OCI-LY7 (cell line): ENCODE measurements at regions of chr6 and their contacts with region 1.

Region 1: DNA sequence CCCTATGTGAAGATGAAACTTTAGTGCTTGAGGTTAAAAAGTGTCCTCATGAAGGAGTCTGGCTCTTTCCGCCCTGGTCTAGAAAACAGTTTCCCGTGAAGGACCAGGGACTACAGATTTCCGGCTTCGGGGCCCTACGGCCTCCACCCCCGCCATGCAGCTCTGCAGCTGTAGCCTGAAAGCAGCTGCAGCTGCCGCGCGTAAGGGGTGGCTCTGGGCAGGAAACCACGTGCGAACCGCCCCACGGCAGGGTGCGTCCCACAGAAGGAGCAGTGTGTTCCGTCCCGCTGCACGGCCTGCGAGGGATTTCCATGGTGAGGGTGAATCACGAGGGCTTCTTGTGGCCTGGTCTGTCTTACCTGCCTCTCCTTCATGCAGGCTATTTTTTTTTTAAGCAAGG is 117.0 kb downstream of the ERMARD start:
- DNase-seq: peak; percentile 83
- H3K4me3 ChIP-seq: no peak overlapping the region
- H3K27ac ChIP-seq: peak overlapping the region; percentile 41
- H3K4me1 ChIP-seq: peaks cover 38% of the 10 kb centered on the region
- CTCF ChIP-seq: no peak

Region 2: GRCh38 chr6:168658059-168658458 is 1210.4 kb before region 1 on chr6:
- CTCF ChIA-PET with region 1: no interaction called
- POLR2A ChIA-PET with region 1: no interaction called
- intact Hi-C with region 1: no loop called
- DNase-seq: no peak
- H3K4me3 ChIP-seq: no peak overlapping the region
- H3K27ac ChIP-seq: no peak overlapping the region
- H3K4me1 ChIP-seq: no peaks in the 10 kb centered on the region
- CTCF ChIP-seq: no peak

Region 3: DNA sequence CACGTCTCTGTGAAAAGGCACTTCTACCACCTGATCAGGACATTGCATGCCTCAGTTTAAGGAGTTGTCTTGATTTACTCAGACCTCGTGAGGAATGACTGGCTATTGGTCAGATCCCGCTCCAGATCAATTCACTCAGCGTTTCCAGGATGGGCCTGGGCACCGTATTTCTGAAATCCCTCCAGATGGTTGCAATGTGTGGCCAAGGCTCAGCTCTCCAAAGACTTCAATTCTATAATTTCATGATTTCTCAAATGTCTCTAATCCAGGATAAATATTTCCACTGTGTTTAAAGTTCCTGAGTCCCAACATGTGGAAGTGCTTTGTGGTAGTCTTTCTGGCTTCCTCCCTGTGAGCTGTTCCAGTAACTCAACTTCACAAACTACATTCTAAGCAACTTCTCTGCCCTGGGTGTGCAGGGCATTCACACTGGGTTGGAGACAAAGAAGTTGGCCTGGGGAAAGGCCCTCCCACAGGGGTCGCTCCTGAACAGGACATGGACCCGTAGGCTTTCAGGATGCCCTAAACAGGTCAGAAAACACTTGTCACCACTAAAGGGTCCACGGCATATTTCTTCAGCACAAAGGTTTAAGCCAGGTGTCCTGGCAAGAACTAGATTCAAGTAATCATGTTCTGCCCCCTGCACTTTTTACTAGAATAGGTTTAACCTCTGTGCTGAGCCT is 378.8 kb before region 1 on chr6:
- CTCF ChIA-PET with region 1: no interaction called
- POLR2A ChIA-PET with region 1: no interaction called
- intact Hi-C with region 1: no loop called
- DNase-seq: no peak
- H3K4me3 ChIP-seq: no peak overlapping the region
- H3K27ac ChIP-seq: no peak overlapping the region
- H3K4me1 ChIP-seq: no peaks in the 10 kb centered on the region
- CTCF ChIP-seq: no peak

Region 4: GRCh38 chr6:169949511-169950097 is 81.1 kb after region 1 on chr6:
- CTCF ChIA-PET with region 1: interaction called, 3 read pairs
- POLR2A ChIA-PET with region 1: no interaction called
- intact Hi-C with region 1: loop called (anchors 2 kb)
- DNase-seq: peak; percentile 58
- H3K4me3 ChIP-seq: peak overlapping the region; percentile 15
- H3K27ac ChIP-seq: peak overlapping the region; percentile 57
- H3K4me1 ChIP-seq: peaks cover 31% of the 10 kb centered on the region
- CTCF ChIP-seq: no peak

Region 5: GRCh38 chr6:169959136-169960002 is 90.9 kb after region 1 on chr6:
- CTCF ChIA-PET with region 1: interaction called, 3 read pairs
- POLR2A ChIA-PET with region 1: interaction called, 3 read pairs
- intact Hi-C with region 1: loop called (anchors 1 kb)
- DNase-seq: peak; percentile 95
- H3K4me3 ChIP-seq: peak overlapping the region; percentile 37
- H3K27ac ChIP-seq: peak overlapping the region; percentile 88
- H3K4me1 ChIP-seq: peaks cover 27% of the 10 kb centered on the region
- CTCF ChIP-seq: peak; percentile 35; the same call in 1 of the 2 replicates